Activated T-helper 2 cell treated with anti-CD3 and anti-CD28 coated beads, Interferon-gamma antibody, Interleukin-2, Interleukin-4, amounts not matched to agents 10 μg/mL and 5 μg/mL and 100 μg/mL, durations not matched to agents 14 hours and 24 hours and 36 hours (primary cell): ENCODE measurements at regions of chr1 and their contacts with region 1.

Region 1: GRCh38 chr1:113928941-113929749 is at the start of gene HIPK1:
- DNase-seq: peak; percentile 90
- H3K4me3 Mint-ChIP-seq: peak within 1 kb of the TSS; percentile 97
- H3K27ac Mint-ChIP-seq: peak within 1 kb of the TSS; percentile 100
- H3K4me1 Mint-ChIP-seq: peaks cover 46% of the 10 kb centered on the region
- H3K27me3 Mint-ChIP-seq: peaks cover 1% of the 10 kb centered on the region
- total RNA-seq, gene HIPK1: 108 and 111 TPM in 2 replicates

Region 2: GRCh38 chr1:112955781-112956543 is 973.2 kb before region 1 on chr1 and contains the start of gene SLC16A1:
- intact Hi-C with region 1: loop called (anchors 2 kb)
- DNase-seq: peak; percentile 88
- H3K4me3 Mint-ChIP-seq: peak within 1 kb of the TSS; percentile 100
- H3K27ac Mint-ChIP-seq: peak within 1 kb of the TSS; percentile 100
- H3K4me1 Mint-ChIP-seq: peaks cover 56% of the 10 kb centered on the region
- H3K27me3 Mint-ChIP-seq: no peaks in the 10 kb centered on the region
- total RNA-seq, gene SLC16A1: 75.8 and 77.1 TPM in 2 replicates

Region 3: DNA sequence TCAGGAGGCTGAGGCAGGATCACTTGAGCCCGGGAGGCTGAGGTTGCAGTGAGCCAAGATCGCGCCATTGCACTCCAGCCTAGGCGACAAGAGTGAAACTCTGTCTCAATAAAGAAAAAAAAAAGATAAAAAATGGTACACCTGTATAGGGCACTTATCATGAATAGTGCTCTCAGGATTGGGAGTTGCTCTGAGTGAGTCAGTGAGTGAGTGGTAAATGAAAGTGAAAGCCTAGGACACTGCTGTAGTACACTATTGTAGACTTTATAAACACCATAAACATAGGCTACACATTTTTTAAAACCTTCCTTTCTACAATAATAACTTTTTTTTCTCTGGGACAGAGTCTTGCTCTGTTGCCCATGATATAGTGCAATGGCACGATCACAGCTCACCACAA is 186.6 kb before region 1 on chr1:
- intact Hi-C with region 1: no loop called
- DNase-seq: no peak
- H3K4me3 Mint-ChIP-seq: peak overlapping the region; percentile 3
- H3K27ac Mint-ChIP-seq: no peak overlapping the region
- H3K4me1 Mint-ChIP-seq: peaks cover 17% of the 10 kb centered on the region
- H3K27me3 Mint-ChIP-seq: no peaks in the 10 kb centered on the region

Region 4: DNA sequence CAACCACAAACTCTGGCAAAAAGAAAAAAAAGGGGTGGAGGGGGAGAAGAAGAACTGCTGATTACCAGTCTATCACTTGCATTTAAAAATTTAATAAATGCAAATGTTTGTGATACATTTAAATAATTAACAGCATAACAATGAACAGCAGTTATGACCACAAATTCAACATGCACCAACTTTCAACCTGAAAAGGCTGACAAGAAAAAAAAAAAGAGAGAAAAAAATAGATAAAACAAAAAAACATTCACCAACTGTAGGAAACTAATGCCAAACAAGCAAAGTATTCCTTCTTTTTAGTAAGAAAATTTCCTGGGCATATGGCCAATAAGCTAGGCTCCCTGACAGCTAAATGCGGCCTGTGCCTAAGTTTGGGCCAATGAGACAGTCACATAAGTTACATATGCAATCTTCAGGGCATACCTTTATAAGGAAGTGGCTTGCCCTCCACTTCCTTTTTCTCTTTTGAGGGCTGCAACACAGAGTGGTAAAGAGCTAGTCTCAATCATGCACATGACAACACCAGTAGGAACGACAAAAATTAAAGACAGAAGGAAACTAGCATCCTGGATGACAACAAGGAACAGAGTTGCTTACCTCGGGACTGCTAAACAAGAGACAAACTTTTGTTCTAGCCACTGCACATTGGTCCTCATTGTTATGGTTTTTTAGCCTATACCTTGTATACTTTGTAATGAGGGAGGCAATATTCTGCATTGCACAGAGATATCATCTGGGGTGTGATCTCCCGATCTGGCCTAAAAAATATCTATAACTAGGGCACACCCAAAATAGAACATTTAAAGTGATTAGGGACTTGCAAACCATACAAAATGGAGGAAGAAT is 145.7 kb before region 1 on chr1:
- intact Hi-C with region 1: loop called (anchors 2 kb)
- DNase-seq: peak; percentile 45
- H3K4me3 Mint-ChIP-seq: peak overlapping the region; percentile 68
- H3K27ac Mint-ChIP-seq: peak overlapping the region; percentile 94
- H3K4me1 Mint-ChIP-seq: peaks cover 34% of the 10 kb centered on the region
- H3K27me3 Mint-ChIP-seq: no peaks in the 10 kb centered on the region

Region 5: DNA sequence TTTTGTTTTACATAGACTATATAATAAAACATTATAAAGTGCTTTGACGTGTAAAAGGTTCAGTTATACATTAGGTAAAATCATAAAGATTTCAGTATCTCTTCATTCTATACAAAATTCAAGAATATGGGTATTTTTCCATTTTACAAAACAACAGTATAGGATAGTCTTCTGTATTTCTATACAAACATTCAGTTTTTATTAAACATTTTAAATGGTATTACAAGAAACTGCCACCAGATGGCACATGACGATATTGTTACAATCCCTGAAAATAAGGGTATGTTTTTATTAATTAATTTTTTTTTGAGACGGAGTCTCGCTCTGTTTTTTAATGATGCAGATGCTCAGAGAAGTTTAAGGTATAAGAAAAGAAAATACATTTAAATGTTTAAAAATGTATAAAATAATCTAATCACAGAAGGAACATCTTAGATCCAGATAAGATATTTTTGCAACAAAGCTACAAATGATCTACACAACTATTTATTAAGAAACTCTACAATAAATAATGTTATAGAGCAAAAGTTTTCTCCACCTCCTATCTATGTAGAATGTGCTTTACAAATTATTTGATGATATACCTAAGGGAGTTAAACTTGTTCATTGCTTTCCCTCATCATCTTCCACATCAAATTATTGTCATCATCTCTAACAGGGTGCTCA is 93.4 kb before region 1 on chr1:
- intact Hi-C with region 1: loop called (anchors 5 kb)
- DNase-seq: no peak
- H3K4me3 Mint-ChIP-seq: no peak overlapping the region
- H3K27ac Mint-ChIP-seq: no peak overlapping the region
- H3K4me1 Mint-ChIP-seq: peaks cover 5% of the 10 kb centered on the region
- H3K27me3 Mint-ChIP-seq: no peaks in the 10 kb centered on the region

Region 6: GRCh38 chr1:113904674-113905434 is 24.3 kb before region 1 on chr1 and contains the starts of genes AP4B1 and DCLRE1B:
- intact Hi-C with region 1: loop called (anchors 1 kb)
- DNase-seq: peak; percentile 99
- H3K4me3 Mint-ChIP-seq: peak within 1 kb of the TSS; percentile 99
- H3K27ac Mint-ChIP-seq: peak within 1 kb of the TSS; percentile 97
- H3K4me1 Mint-ChIP-seq: peaks cover 59% of the 10 kb centered on the region
- H3K27me3 Mint-ChIP-seq: no peaks in the 10 kb centered on the region
- total RNA-seq, gene AP4B1: 42.0 and 45.9 TPM in 2 replicates
- total RNA-seq, gene DCLRE1B: 18.8 and 20.8 TPM in 2 replicates

Region 7: GRCh38 chr1:113978863-113979702 is 49.9 kb after region 1 on chr1 and contains the start of gene OLFML3:
- intact Hi-C with region 1: loop called (anchors 5 kb)
- DNase-seq: no peak
- H3K4me3 Mint-ChIP-seq: no peak within 1 kb of the TSS
- H3K27ac Mint-ChIP-seq: peak within 1 kb of the TSS; percentile 32
- H3K4me1 Mint-ChIP-seq: peaks cover 39% of the 10 kb centered on the region
- H3K27me3 Mint-ChIP-seq: no peaks in the 10 kb centered on the region
- total RNA-seq, gene OLFML3: 0.11 and 0.18 TPM in 2 replicates

Region 8: DNA sequence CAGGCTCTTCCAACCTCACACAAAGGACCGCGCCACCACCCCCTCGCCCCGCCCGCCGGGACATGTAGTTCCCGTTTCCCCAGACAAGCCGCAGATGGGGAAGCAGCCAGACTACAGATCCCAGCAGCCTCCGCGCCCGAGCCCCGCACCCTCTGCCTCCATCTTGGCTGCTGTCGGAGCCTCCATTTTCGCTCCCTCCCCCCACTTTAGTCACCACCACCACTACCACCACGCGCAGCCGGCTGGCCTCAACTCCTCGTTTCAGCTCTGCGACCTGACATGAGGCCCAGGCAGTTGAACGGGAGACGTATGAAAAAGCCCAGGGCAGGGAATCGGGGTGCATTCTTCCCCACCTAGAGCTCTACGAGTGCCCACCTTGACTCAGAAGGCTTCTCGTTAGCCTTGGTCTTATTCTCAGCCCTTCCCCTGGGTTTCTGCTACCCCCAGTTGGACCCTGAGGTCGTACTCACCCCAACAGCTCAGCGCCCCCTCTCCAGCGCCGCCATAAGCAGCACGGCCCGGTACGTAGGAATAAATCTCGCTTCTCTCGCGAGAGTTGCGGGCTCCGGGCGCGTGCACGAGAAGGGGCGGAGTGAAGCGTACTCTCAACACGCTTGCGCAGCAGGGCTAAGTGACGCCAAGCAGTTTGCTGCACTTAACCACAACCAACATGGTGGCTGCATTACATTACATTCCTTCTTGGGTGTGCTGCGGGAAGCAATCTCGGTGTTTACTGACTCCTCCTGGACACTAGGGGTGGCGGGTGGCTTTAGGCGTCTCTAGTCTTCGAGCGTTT is 828.5 kb after region 1 on chr1 and contains the start of gene CSDE1:
- intact Hi-C with region 1: loop called (anchors 2 kb)
- DNase-seq: peak; percentile 96
- H3K4me3 Mint-ChIP-seq: peak within 1 kb of the TSS; percentile 97
- H3K27ac Mint-ChIP-seq: peak within 1 kb of the TSS; percentile 99
- H3K4me1 Mint-ChIP-seq: peaks cover 53% of the 10 kb centered on the region
- H3K27me3 Mint-ChIP-seq: no peaks in the 10 kb centered on the region
- total RNA-seq, gene CSDE1: 411 and 414 TPM in 2 replicates